Esophagus muscularis mucosa (tissue), 4 donors: ENCODE measurements at regions of chr2 and their contacts with region 1.

Region 1: DNA sequence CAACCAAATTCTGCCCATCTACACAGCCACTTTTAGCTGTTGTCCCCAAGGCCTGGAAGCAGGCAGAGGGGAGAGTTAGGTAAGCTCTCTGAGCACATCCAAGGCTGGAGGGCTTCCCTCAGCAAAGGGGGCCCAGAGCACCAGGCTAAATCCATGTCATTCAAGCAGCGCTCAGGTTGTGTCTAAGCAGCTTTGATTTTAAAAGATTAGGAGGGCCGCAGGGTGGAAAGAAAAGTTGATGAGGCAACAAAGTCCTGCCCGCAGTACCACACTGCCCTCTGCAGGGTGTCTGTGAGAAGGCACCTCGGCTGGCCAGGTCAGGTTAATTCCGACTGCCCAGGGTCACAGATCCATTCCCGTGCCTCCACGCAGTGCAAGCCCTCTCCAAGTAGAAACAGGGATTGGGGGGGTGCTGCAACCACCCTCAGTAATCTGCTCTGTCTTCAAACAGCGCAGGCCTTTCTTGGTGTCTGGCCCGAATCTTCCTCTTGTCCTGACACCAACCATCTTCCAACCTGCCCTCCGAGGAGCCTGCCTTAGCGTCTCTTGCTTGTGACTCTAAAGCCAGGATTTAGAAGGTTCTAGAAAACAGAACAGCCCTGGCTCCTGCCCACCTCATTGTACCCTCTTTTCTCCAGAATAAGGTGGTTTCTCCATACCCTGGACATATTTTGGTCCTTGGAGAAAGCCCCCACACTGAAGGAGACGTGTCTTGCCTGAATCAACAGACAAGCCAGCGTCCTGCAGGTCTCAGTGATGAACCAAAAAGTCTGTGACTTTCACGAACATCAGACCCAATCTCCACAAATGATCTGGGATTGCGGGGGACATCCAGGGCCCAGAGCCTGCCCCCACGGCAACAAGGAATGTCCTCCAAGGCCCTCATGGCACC is 289.2 kb downstream of the TNS1 start:
- DNase-seq: peak; percentile 96
- H3K4me3 ChIP-seq: no peak overlapping the region
- H3K27ac ChIP-seq: peak overlapping the region; percentile 67 to 75 (median 68)
- H3K4me1 ChIP-seq: peaks cover 15 to 57% (median 40%) of the 10 kb centered on the region in 4 donors
- H3K27me3 ChIP-seq: no peaks in the 10 kb centered on the region
- CTCF ChIP-seq: peak; percentile 95 to 99 (median 96)
- EP300 ChIP-seq: no peak
- POLR2A ChIP-seq: no peak

Region 2: GRCh38 chr2:217652761-217653639 is 60.6 kb before region 1 on chr2:
- intact Hi-C with region 1: loop called (anchors 2 kb)
- DNase-seq: no peak
- H3K4me3 ChIP-seq: no peak overlapping the region
- H3K27ac ChIP-seq: peak overlapping the region; percentile 53 to 70 (median 56)
- H3K4me1 ChIP-seq: peaks cover 3 to 31% (median 19%) of the 10 kb centered on the region in 4 donors
- H3K27me3 ChIP-seq: no peaks in the 10 kb centered on the region
- CTCF ChIP-seq: peak in 1 of 3 experiments; percentile 12
- EP300 ChIP-seq: no peak
- POLR2A ChIP-seq: no peak

Region 3: GRCh38 chr2:217789003-217789735 is 75.5 kb after region 1 on chr2:
- intact Hi-C with region 1: no loop called
- DNase-seq: peak; percentile 97
- H3K4me3 ChIP-seq: peak overlapping the region in 1 of 4 donors; percentile 8
- H3K27ac ChIP-seq: peak overlapping the region; percentile 66 to 74 (median 70)
- H3K4me1 ChIP-seq: peaks cover 20 to 59% (median 34%) of the 10 kb centered on the region in 4 donors
- H3K27me3 ChIP-seq: no peaks in the 10 kb centered on the region
- CTCF ChIP-seq: peak; percentile 99
- EP300 ChIP-seq: no peak
- POLR2A ChIP-seq: no peak